CD4-positive, alpha-beta memory T cell (primary cell): ENCODE measurements at regions of chr13 and their contacts with region 1.

Region 1: DNA sequence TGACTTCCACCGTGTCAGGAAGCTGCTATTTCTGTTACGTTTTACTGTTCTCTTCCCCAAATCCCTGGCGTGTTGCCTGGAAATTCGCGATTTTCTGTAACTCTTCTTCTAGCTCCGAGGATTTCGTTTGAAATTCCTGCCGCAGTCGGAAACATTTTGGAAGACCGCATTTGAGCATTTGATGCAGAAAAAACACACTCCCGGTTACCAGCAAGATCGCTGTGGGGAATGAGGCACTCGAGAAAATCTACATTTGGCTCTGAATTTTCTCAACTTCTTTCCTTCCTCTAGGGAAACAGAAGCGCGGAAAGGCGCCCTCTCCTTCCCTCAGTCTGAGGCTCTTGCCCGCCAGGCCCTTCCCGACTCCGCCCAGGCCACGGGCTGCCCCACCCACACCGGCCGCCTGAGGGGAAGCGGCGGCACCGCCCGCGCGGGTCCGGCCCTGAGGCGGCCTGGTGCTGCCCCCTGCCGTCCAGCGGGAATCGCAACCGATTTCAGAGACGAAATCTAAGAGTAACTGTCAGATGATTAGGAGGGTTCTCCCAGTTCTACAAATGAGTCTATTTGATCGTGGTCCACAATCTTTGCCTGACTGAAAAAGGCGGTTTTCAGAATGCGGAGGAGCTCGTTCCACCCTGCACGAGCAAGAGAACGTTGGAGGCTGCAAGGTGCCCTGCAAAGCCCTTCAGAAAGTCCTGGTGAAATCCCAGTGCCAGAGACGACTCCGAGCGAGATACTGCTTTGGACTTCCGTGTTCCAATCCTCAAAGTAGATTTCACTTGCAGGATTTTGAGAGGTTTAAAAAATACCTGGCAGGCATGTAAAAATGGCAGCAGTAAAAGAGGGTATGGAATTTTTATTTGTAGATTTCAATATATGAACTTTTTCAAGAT is 18.4 kb upstream of the TUBGCP3 start:
- DNase-seq: peak; percentile 75 to 83 (median 76)
- H3K4me3 ChIP-seq: peak overlapping the region in 1 of 2 donors; percentile 45
- H3K4me3 Mint-ChIP-seq: peak overlapping the region; percentile 75 to 90 (median 82)
- H3K27ac ChIP-seq: no peak overlapping the region
- H3K27ac Mint-ChIP-seq: peak overlapping the region in 3 of 7 donors; percentile 7 to 80 (median 38)
- H3K4me1 ChIP-seq: peaks cover 4% of the 10 kb centered on the region
- H3K4me1 Mint-ChIP-seq: peaks cover 5 to 13% (median 9%) of the 10 kb centered on the region in 4 donors
- H3K27me3 ChIP-seq: peaks cover 3% of the 10 kb centered on the region
- H3K27me3 Mint-ChIP-seq: peaks cover 14 to 18% of the 10 kb centered on the region in 2 donors

Region 2: DNA sequence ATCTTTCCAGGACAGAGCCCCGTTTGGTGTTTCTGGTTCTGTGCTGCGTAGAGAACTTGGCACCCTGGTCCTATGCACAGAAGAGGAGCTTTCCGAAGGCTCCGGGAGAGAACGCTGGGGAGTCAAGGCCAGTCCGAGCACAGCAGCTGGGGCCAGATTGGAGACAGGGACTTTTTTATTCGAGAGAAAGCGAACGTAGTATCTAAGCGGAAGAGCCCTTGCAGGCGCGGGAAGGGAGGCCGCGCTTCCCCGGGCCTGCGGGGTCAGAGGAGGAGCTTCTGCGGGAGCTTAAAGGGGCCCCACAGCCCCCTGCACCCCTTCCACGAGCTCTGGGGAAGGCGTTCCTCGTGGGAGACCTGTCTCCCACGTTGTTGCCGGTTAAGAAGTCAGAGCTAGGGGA is 1539.8 kb before region 1 on chr13:
- CTCF ChIA-PET with region 1: interaction called, 3 read pairs
- POLR2A ChIA-PET with region 1: no interaction called
- intact Hi-C with region 1: loop called (anchors 10 kb)
- DNase-seq: no peak
- H3K4me3 ChIP-seq: no peak overlapping the region
- H3K4me3 Mint-ChIP-seq: peak overlapping the region; percentile 27 to 75 (median 68)
- H3K27ac ChIP-seq: no peak overlapping the region
- H3K27ac Mint-ChIP-seq: peak overlapping the region in 1 of 7 donors; percentile 68
- H3K4me1 ChIP-seq: peaks cover 6% of the 10 kb centered on the region
- H3K4me1 Mint-ChIP-seq: peaks cover 2 to 14% (median 7%) of the 10 kb centered on the region in 4 donors
- H3K27me3 ChIP-seq: peaks cover 5% of the 10 kb centered on the region
- H3K27me3 Mint-ChIP-seq: peaks cover 35 to 54% of the 10 kb centered on the region in 2 donors

Region 3: GRCh38 chr13:111474136-111475002 is 1132.0 kb before region 1 on chr13:
- CTCF ChIA-PET with region 1: interaction called, 26 read pairs
- POLR2A ChIA-PET with region 1: no interaction called
- intact Hi-C with region 1: no loop called
- DNase-seq: peak in 2 of 5 donors; percentile 2 to 4
- H3K4me3 ChIP-seq: no peak overlapping the region
- H3K4me3 Mint-ChIP-seq: no peak overlapping the region
- H3K27ac ChIP-seq: no peak overlapping the region
- H3K27ac Mint-ChIP-seq: no peak overlapping the region
- H3K4me1 ChIP-seq: no peaks in the 10 kb centered on the region
- H3K4me1 Mint-ChIP-seq: no peaks in the 10 kb centered on the region
- H3K27me3 ChIP-seq: no peaks in the 10 kb centered on the region
- H3K27me3 Mint-ChIP-seq: peaks cover 3 to 5% of the 10 kb centered on the region in 2 donors

Region 4: GRCh38 chr13:112522578-112522977 is 83.8 kb before region 1 on chr13:
- CTCF ChIA-PET with region 1: no interaction called
- POLR2A ChIA-PET with region 1: no interaction called
- intact Hi-C with region 1: loop called (anchors 10 kb)
- DNase-seq: no peak
- H3K4me3 ChIP-seq: no peak overlapping the region
- H3K4me3 Mint-ChIP-seq: no peak overlapping the region
- H3K27ac ChIP-seq: no peak overlapping the region
- H3K27ac Mint-ChIP-seq: no peak overlapping the region
- H3K4me1 ChIP-seq: no peaks in the 10 kb centered on the region
- H3K4me1 Mint-ChIP-seq: no peaks in the 10 kb centered on the region
- H3K27me3 ChIP-seq: no peaks in the 10 kb centered on the region
- H3K27me3 Mint-ChIP-seq: no peaks in the 10 kb centered on the region

Region 5: DNA sequence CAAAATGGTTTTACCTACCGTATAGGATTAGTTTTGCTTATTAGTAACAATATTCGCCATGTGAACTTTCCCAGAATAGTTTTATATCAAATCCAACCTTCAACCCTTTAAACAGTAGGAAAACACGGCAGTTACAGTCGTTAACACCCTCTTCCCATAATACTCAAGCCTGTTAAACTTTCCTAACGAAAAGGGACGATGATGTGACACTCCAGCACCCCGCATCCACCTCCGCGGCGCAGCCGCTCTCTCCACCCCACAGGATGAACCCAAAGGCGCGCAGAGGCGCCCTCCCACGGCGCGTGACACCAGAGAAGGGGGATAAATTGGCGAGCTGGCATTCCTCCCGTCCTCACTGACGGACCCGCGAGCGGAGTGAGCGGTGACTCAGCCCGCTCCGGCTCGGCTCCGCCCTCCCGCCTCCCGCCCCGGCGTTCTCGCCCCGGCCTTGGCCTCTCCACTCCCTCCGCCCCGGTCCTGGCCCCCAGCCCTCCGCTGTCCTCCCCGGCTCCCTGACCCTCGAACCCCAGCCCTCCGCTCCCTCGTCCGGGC is 19.1 kb before region 1 on chr13:
- CTCF ChIA-PET with region 1: interaction called, 29 read pairs
- POLR2A ChIA-PET with region 1: no interaction called
- intact Hi-C with region 1: loop called (anchors 1 kb)
- DNase-seq: peak; percentile 42 to 77 (median 44)
- H3K4me3 ChIP-seq: peak overlapping the region; percentile 72 to 74
- H3K4me3 Mint-ChIP-seq: peak overlapping the region; percentile 90 to 95 (median 94)
- H3K27ac ChIP-seq: peak overlapping the region; percentile 58
- H3K27ac Mint-ChIP-seq: peak overlapping the region; percentile 82 to 95 (median 94)
- H3K4me1 ChIP-seq: peaks cover 32% of the 10 kb centered on the region
- H3K4me1 Mint-ChIP-seq: peaks cover 24 to 55% (median 39%) of the 10 kb centered on the region in 4 donors
- H3K27me3 ChIP-seq: no peaks in the 10 kb centered on the region
- H3K27me3 Mint-ChIP-seq: no peaks in the 10 kb centered on the region

Region 6: DNA sequence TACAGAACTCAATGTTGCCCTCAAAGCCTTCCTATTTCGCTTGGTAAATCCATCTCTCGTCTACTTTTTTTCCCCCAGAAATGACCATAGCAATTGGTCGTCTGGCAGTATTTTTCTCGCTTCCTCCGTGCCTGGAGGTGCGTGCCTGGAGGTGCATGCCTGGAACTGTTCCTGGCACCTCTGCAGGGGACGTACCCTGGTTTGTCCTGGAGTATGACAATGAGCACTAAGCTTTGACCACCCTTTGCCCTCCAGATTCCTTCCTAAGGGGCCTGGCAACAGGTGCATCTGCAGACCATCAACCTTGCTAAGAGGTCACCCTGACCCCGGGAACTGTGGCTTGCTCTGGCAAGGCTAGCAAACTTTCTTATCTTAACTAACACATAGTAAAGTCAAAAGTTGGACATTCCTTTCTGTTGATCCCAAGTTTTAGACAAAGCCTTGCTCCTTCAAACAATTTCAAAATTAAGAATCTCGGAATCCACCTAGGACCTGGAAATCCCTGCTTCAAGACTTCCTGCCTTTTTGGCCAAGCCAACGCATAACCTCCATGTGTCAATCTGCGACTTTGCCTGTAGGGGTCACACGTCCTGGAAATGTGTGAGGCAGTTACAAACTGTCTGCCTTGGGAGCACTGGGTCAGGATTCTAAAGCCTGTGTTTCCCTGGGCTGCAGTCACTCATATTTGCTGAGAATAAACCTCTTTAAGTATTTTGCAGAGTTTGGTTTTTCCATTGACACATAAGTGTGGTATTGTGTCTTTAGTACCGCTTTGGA is 10.4 kb after region 1 on chr13:
- CTCF ChIA-PET with region 1: interaction called, 10 read pairs
- POLR2A ChIA-PET with region 1: no interaction called
- intact Hi-C with region 1: no loop called
- DNase-seq: peak in 1 of 5 donors; percentile 5
- H3K4me3 ChIP-seq: no peak overlapping the region
- H3K4me3 Mint-ChIP-seq: no peak overlapping the region
- H3K27ac ChIP-seq: no peak overlapping the region
- H3K27ac Mint-ChIP-seq: peak overlapping the region in 1 of 7 donors; percentile 57
- H3K4me1 ChIP-seq: no peaks in the 10 kb centered on the region
- H3K4me1 Mint-ChIP-seq: no peaks in the 10 kb centered on the region
- H3K27me3 ChIP-seq: no peaks in the 10 kb centered on the region
- H3K27me3 Mint-ChIP-seq: peaks cover 15 to 16% of the 10 kb centered on the region in 2 donors

Region 7: GRCh38 chr13:113837554-113838355 is 1231.4 kb after region 1 on chr13:
- CTCF ChIA-PET with region 1: no interaction called
- POLR2A ChIA-PET with region 1: no interaction called
- intact Hi-C with region 1: no loop called
- DNase-seq: no peak
- H3K4me3 ChIP-seq: no peak overlapping the region
- H3K4me3 Mint-ChIP-seq: peak overlapping the region in 1 of 8 donors; percentile 24
- H3K27ac ChIP-seq: no peak overlapping the region
- H3K27ac Mint-ChIP-seq: peak overlapping the region in 1 of 7 donors; percentile 1
- H3K4me1 ChIP-seq: peaks cover 19% of the 10 kb centered on the region
- H3K4me1 Mint-ChIP-seq: peaks cover 5 to 24% (median 13%) of the 10 kb centered on the region in 4 donors
- H3K27me3 ChIP-seq: no peaks in the 10 kb centered on the region
- H3K27me3 Mint-ChIP-seq: no peaks in the 10 kb centered on the region